SK-N-SH (cell line): ENCODE measurements at regions of chr3 and their contacts with region 1.

Region 1: GRCh38 chr3:39288300-39288808 is 8.5 kb upstream of the CX3CR1 start:
- DNase-seq: peak; percentile 92
- H3K4me3 ChIP-seq: no peak overlapping the region; a peak in 1 of 4 replicates
- H3K27ac ChIP-seq: no peak overlapping the region
- H3K4me1 ChIP-seq: no peaks in the 10 kb centered on the region
- H3K27me3 ChIP-seq: no peaks in the 10 kb centered on the region
- CTCF ChIP-seq: peak; percentile 95
- EP300 ChIP-seq: no peak
- RAD21 ChIP-seq: peak; percentile 98

Region 2: GRCh38 chr3:38890426-38890825 is 397.9 kb before region 1 on chr3:
- CTCF ChIA-PET with region 1: no interaction called
- POLR2A ChIA-PET with region 1: no interaction called
- DNase-seq: no peak
- H3K4me3 ChIP-seq: no peak overlapping the region
- H3K27ac ChIP-seq: no peak overlapping the region
- H3K4me1 ChIP-seq: no peaks in the 10 kb centered on the region
- H3K27me3 ChIP-seq: no peaks in the 10 kb centered on the region
- CTCF ChIP-seq: no peak
- EP300 ChIP-seq: no peak
- RAD21 ChIP-seq: no peak

Region 3: DNA sequence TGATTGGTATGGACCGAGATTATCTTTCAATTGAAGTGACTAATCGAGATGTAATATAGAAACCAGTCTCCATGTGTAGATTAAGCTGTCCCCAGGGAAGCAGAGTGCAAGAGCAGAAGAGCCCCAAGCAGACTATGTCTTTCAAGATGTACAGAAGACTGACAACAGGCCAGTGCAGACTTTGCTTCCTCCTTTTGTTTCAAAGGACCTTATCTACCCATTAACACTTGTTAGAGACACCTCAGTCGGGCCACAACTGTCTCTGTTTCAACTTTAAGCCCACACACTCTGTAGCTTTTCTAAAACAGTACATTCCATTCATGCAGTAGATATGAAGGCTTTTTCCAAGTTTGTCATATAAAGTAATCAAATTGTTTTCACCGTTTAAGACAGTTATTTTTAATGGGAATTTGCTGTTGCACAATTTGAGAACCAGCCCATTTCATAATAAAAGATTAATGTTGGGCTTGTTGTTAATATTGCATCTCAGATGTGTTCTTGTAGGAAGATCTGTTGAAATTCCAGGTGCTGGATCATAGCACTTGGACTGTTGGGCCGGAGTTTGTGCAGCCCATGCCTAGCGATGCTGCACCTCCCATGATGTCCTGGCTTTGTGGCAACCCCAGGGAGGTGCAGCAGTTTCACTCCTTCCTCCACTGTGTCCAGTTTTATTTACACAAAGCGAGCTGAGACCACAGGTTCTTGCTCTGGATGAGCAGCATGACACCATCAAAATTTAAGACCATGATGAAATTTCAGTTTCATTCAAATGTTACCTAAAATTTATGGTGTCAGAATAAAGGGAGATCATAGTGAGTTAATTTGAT is 193.3 kb before region 1 on chr3:
- CTCF ChIA-PET with region 1: interaction called, 11 read pairs
- POLR2A ChIA-PET with region 1: no interaction called
- DNase-seq: no peak
- H3K4me3 ChIP-seq: no peak overlapping the region
- H3K27ac ChIP-seq: no peak overlapping the region
- H3K4me1 ChIP-seq: no peaks in the 10 kb centered on the region; a peak in 1 of 4 replicates
- H3K27me3 ChIP-seq: no peaks in the 10 kb centered on the region
- CTCF ChIP-seq: no peak
- EP300 ChIP-seq: no peak
- RAD21 ChIP-seq: no peak

Region 4: GRCh38 chr3:39126532-39127071 is 161.8 kb before region 1 on chr3:
- CTCF ChIA-PET with region 1: interaction called, 223 read pairs
- POLR2A ChIA-PET with region 1: interaction called, 3 read pairs
- DNase-seq: peak; percentile 52
- H3K4me3 ChIP-seq: no peak overlapping the region; a peak in 1 of 4 replicates
- H3K27ac ChIP-seq: no peak overlapping the region
- H3K4me1 ChIP-seq: 0 out of 4 replicates have a peak, but pooled peaks cover 0 to 6% of the 10 kb centered on the region in 2 experiments
- H3K27me3 ChIP-seq: no peaks in the 10 kb centered on the region
- CTCF ChIP-seq: peak; percentile 74
- EP300 ChIP-seq: no peak
- RAD21 ChIP-seq: peak; percentile 80

Region 5: DNA sequence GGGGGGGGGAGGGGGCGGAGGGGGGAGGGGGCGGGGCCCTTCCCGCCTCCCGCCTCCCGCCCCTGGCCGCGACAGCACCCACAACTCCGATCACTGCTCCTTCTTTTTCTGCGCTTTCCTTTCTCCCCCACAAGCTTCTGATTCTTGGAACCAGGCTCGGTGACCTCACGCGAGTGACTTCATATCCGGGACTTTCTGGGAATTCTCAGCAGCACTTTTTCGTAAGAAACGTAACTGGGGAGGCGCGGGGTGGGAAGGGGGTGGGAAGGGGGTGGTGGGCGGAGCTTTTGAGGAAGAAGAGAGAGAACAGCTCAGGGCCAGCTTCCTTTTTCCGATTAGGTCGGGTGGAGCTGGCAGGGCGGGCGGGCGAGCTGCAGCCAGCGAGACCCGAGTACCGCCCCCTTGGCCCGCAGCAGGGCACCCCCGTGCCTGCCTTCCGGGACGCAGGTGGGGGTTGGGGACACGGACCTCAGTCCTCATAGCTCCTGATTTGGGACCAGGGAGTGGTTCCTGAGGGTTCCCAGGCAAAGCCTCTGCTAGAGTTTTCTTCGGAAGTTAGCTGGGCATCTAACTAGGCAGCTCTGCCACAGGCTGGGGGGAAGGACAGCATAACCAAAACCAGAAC is 110.5 kb before region 1 on chr3:
- CTCF ChIA-PET with region 1: interaction called, 510 read pairs
- POLR2A ChIA-PET with region 1: no interaction called
- DNase-seq: peak; percentile 88
- H3K4me3 ChIP-seq: peak overlapping the region; percentile 49 to 61; a peak in 3 of 4 replicates
- H3K27ac ChIP-seq: peak overlapping the region; percentile 79 to 86
- H3K4me1 ChIP-seq: peaks cover 7 to 25% of the 10 kb centered on the region in 2 experiments; a peak in 3 of 4 replicates
- H3K27me3 ChIP-seq: no peaks in the 10 kb centered on the region
- CTCF ChIP-seq: no peak
- EP300 ChIP-seq: no peak
- RAD21 ChIP-seq: no peak

Region 6: GRCh38 chr3:39216176-39216790 is 72.1 kb before region 1 on chr3:
- CTCF ChIA-PET with region 1: interaction called, 26 read pairs
- POLR2A ChIA-PET with region 1: no interaction called
- DNase-seq: no peak
- H3K4me3 ChIP-seq: no peak overlapping the region
- H3K27ac ChIP-seq: no peak overlapping the region
- H3K4me1 ChIP-seq: no peaks in the 10 kb centered on the region
- H3K27me3 ChIP-seq: peaks cover 14% of the 10 kb centered on the region; the same call in 1 of the 2 replicates
- CTCF ChIP-seq: no peak
- EP300 ChIP-seq: no peak
- RAD21 ChIP-seq: no peak

Region 7: GRCh38 chr3:39273119-39273518 is 15.2 kb before region 1 on chr3:
- CTCF ChIA-PET with region 1: interaction called, 94 read pairs
- POLR2A ChIA-PET with region 1: no interaction called
- DNase-seq: no peak
- H3K4me3 ChIP-seq: no peak overlapping the region
- H3K27ac ChIP-seq: no peak overlapping the region
- H3K4me1 ChIP-seq: no peaks in the 10 kb centered on the region
- H3K27me3 ChIP-seq: peaks cover 8% of the 10 kb centered on the region; the same call in 1 of the 2 replicates
- CTCF ChIP-seq: no peak; the same call in 1 of the 2 replicates
- EP300 ChIP-seq: no peak
- RAD21 ChIP-seq: no peak

Region 8: DNA sequence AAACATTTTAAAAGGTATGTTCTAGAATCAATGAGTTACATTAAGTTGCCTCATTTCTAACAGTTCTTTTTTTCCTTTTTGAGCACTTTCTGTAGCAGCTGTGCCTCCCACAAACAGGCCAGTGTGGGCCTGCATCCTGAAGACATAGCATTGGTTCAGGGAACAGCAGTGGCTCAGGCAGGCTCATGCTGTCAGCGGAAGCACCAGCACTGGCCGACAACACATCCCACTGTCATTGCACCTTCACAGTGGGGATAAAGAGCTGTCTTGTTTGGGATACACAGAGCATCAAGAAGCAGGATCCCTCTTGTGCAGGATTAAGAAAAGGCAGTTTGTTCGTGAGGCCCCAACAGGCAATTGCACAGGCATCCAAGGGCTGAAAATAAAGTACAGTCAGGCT is 302.5 kb after region 1 on chr3:
- CTCF ChIA-PET with region 1: no interaction called
- POLR2A ChIA-PET with region 1: no interaction called
- DNase-seq: no peak
- H3K4me3 ChIP-seq: no peak overlapping the region
- H3K27ac ChIP-seq: no peak overlapping the region
- H3K4me1 ChIP-seq: no peaks in the 10 kb centered on the region
- H3K27me3 ChIP-seq: no peaks in the 10 kb centered on the region
- CTCF ChIP-seq: no peak
- EP300 ChIP-seq: no peak
- RAD21 ChIP-seq: no peak

Region 9: GRCh38 chr3:40086890-40087888 is 798.8 kb after region 1 on chr3:
- CTCF ChIA-PET with region 1: no interaction called
- POLR2A ChIA-PET with region 1: no interaction called
- DNase-seq: no peak
- H3K4me3 ChIP-seq: no peak overlapping the region
- H3K27ac ChIP-seq: no peak overlapping the region
- H3K4me1 ChIP-seq: peaks cover 0 to 3% of the 10 kb centered on the region in 2 experiments; a peak in 1 of 4 replicates
- H3K27me3 ChIP-seq: no peaks in the 10 kb centered on the region
- CTCF ChIP-seq: no peak
- EP300 ChIP-seq: no peak
- RAD21 ChIP-seq: no peak